Panc1 (cell line): ENCODE measurements at regions of chr22 and their contacts with region 1.

Region 1: DNA sequence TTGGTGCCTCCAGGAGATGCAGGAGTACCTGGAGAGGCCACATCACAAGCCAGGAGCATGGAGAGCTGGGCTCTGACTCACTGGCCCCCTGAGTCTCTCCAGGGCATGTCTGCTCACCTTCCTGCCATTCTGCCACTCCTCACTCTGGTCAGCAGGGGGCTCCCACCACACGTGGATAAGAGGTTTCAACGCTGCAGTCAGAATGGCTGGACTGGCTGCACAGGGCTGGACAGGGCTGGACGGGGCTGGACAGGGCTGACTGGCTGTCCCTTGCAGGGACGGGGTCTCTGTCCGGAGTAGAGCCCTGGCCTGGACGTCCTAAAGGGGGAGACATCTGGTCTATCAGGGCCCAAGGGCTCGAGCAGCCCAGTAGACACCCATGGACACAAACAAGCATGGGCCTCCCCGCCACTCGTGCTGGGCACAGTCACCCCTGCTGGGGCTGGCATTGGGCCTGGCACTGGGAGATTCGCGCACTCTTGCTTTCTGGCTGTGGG is 34.6 kb downstream of the CYTH4 start:
- DNase-seq: peak; percentile 58
- ATAC-seq: peak; percentile 87
- H3K4me3 ChIP-seq: no peak overlapping the region
- H3K27ac ChIP-seq: no peak overlapping the region
- H3K4me1 ChIP-seq: peaks cover 20% of the 10 kb centered on the region
- H3K27me3 ChIP-seq: no peaks in the 10 kb centered on the region
- CTCF ChIP-seq: peak; percentile 86

Region 2: DNA sequence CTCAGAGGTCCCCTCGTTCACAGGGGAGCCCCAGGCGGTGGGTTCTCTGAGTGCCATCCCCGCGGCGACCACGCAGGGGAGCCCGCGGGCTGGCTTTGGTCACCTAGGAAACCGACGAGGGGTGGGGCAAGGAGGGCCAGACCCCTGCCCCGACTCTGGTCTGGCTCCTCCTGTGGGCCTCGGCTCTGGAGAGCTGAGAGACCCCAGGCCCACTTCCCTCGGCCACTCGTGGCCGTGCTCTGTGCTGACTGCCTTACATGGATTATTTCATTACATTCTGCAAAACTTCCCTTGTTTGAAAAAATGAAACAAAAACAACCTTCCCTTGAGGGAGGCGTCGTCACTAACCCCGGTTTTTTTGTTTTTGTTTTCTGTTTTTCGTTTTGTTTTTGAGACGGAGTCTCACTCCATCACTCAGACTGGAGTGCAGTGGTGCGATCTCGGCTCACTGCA is 49.8 kb before region 1 on chr22:
- CTCF ChIA-PET with region 1: interaction called, 4 read pairs
- POLR2A ChIA-PET with region 1: interaction called, 12 read pairs
- in situ Hi-C with region 1: no loop called
- intact Hi-C with region 1: no loop called
- DNase-seq: no peak
- ATAC-seq: peak; percentile 89
- H3K4me3 ChIP-seq: peak overlapping the region; percentile 46 to 62
- H3K27ac ChIP-seq: peak overlapping the region; percentile 66
- H3K4me1 ChIP-seq: no peaks in the 10 kb centered on the region
- H3K27me3 ChIP-seq: no peaks in the 10 kb centered on the region
- CTCF ChIP-seq: peak; percentile 91

Region 3: DNA sequence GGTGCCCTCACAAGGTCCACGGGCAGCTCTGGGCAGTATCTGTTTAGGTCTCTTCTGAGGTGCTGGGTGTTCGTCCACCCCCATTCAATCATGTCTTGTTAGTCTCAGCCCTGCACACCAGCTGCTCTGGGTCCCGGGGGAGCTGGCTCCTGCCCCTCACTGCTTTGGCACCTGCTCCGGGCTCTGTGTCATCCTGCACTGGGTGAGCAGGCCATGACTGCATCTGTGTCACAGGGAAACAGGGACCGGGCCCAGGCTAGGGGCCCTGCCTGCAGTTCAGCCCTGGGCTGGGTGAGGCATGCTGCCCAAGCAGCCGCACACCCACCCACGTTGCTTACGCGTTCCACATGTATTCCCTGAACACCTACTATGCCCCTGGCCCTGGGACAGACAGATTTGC is 66.4 kb after region 1 on chr22:
- CTCF ChIA-PET with region 1: no interaction called
- POLR2A ChIA-PET with region 1: no interaction called
- in situ Hi-C with region 1: no loop called
- intact Hi-C with region 1: no loop called
- DNase-seq: no peak
- ATAC-seq: no peak
- H3K4me3 ChIP-seq: no peak overlapping the region
- H3K27ac ChIP-seq: no peak overlapping the region
- H3K4me1 ChIP-seq: peaks cover 12% of the 10 kb centered on the region
- H3K27me3 ChIP-seq: no peaks in the 10 kb centered on the region
- CTCF ChIP-seq: no peak

Region 4: GRCh38 chr22:37428649-37429586 is 112.0 kb after region 1 on chr22:
- CTCF ChIA-PET with region 1: interaction called, 10 read pairs
- POLR2A ChIA-PET with region 1: no interaction called
- in situ Hi-C with region 1: no loop called
- intact Hi-C with region 1: loop called (anchors 5 kb)
- DNase-seq: peak; percentile 27
- ATAC-seq: peak; percentile 67
- H3K4me3 ChIP-seq: no peak overlapping the region
- H3K27ac ChIP-seq: no peak overlapping the region
- H3K4me1 ChIP-seq: peaks cover 8% of the 10 kb centered on the region
- H3K27me3 ChIP-seq: no peaks in the 10 kb centered on the region
- CTCF ChIP-seq: peak; percentile 88

Region 5: GRCh38 chr22:37457093-37457893 is 140.4 kb after region 1 on chr22:
- CTCF ChIA-PET with region 1: interaction called, 4 read pairs
- POLR2A ChIA-PET with region 1: interaction called, 10 read pairs
- in situ Hi-C with region 1: no loop called
- intact Hi-C with region 1: loop called (anchors 2 kb)
- DNase-seq: peak; percentile 33
- ATAC-seq: peak; percentile 91
- H3K4me3 ChIP-seq: no peak overlapping the region
- H3K27ac ChIP-seq: peak overlapping the region; percentile 66
- H3K4me1 ChIP-seq: peaks cover 19% of the 10 kb centered on the region
- H3K27me3 ChIP-seq: no peaks in the 10 kb centered on the region
- CTCF ChIP-seq: peak; percentile 91